Left ventricle myocardium inferior (tissue), 1 donor: ENCODE measurements at regions of chr12 and their contacts with region 1.

Region 1: DNA sequence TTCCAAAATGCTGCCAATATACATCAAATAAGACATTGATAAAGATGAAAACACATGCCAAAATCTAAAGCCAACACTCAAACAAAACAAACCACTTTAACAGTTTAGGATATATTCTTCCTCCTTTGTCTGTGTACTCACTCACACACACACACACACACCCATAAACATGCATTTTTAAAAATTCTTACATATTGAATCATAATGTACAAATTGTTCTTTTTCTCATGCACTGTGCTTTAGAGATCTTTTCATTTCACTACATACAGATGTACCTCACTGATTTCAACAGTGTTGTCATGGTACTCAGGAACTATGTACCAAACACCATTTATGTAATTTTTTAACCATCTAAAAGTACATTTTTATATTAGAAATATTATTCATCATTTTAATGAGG is 9.5 kb upstream of the RERG start:
- DNase-seq: no peak
- H3K4me3 ChIP-seq: no peak overlapping the region
- H3K27ac ChIP-seq: no peak overlapping the region
- H3K4me1 ChIP-seq: no peaks in the 10 kb centered on the region
- H3K27me3 ChIP-seq: peaks cover 45% of the 10 kb centered on the region
- CTCF ChIP-seq: no peak

Region 2: DNA sequence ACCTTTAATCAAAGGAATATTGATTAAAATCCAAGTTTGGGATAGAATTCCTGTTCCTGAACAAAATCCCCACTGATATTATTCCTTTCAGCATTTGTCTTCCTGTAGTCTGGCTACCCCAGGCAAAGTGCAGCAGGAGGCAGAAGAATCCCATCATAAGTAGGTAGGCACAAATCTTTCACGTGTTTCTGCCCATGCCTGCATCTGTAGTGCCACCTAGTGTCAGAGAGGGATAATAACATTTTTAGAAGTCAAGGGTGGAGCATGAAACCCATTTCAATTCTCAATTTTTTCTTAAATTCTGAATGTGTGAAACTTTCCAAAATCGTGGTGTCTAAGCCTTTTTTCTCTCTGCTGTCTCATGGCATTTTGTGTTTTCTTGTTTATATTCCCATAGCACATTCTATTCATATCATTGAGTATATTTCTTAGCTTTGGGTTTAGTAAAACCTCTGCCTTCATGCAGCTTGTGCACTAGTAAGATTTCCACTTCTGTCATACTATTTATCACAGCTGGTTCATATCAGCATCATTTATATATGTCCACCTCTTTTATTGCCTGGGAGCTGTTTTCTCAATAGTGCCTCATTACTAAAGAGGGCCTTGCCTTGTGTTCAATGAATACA is 38.3 kb after region 1 on chr12:
- intact Hi-C with region 1: loop called (anchors 5 kb)
- DNase-seq: peak; percentile 14
- H3K4me3 ChIP-seq: no peak overlapping the region
- H3K27ac ChIP-seq: no peak overlapping the region
- H3K4me1 ChIP-seq: no peaks in the 10 kb centered on the region
- H3K27me3 ChIP-seq: no peaks in the 10 kb centered on the region
- CTCF ChIP-seq: peak; percentile 90